OCI-LY7 (cell line): ENCODE measurements at regions of chr19 and their contacts with region 1.

Region 1: GRCh38 chr19:33771384-33772101 is 25.1 kb upstream of the KCTD15 start:
- DNase-seq: peak; percentile 73
- H3K4me3 ChIP-seq: no peak overlapping the region
- H3K27ac ChIP-seq: no peak overlapping the region
- H3K4me1 ChIP-seq: no peaks in the 10 kb centered on the region
- CTCF ChIP-seq: peak; percentile 87

Region 2: GRCh38 chr19:33416307-33417215 is 355.0 kb before region 1 on chr19:
- CTCF ChIA-PET with region 1: no interaction called
- POLR2A ChIA-PET with region 1: no interaction called
- intact Hi-C with region 1: loop called (anchors 1 kb)
- DNase-seq: peak; percentile 66
- H3K4me3 ChIP-seq: no peak overlapping the region
- H3K27ac ChIP-seq: no peak overlapping the region
- H3K4me1 ChIP-seq: no peaks in the 10 kb centered on the region
- CTCF ChIP-seq: peak; percentile 84

Region 3: GRCh38 chr19:33430674-33431277 is 340.8 kb before region 1 on chr19:
- CTCF ChIA-PET with region 1: no interaction called
- POLR2A ChIA-PET with region 1: no interaction called
- intact Hi-C with region 1: loop called (anchors 1 kb)
- DNase-seq: peak; percentile 60
- H3K4me3 ChIP-seq: no peak overlapping the region
- H3K27ac ChIP-seq: no peak overlapping the region
- H3K4me1 ChIP-seq: no peaks in the 10 kb centered on the region
- CTCF ChIP-seq: peak; percentile 85

Region 4: GRCh38 chr19:33698664-33699435 is 72.7 kb before region 1 on chr19:
- CTCF ChIA-PET with region 1: no interaction called
- POLR2A ChIA-PET with region 1: no interaction called
- intact Hi-C with region 1: loop called (anchors 5 kb)
- DNase-seq: no peak
- H3K4me3 ChIP-seq: no peak overlapping the region
- H3K27ac ChIP-seq: no peak overlapping the region
- H3K4me1 ChIP-seq: no peaks in the 10 kb centered on the region
- CTCF ChIP-seq: no peak

Region 5: GRCh38 chr19:33740811-33741396 is 30.6 kb before region 1 on chr19:
- CTCF ChIA-PET with region 1: no interaction called
- POLR2A ChIA-PET with region 1: no interaction called
- intact Hi-C with region 1: no loop called
- DNase-seq: peak; percentile 45
- H3K4me3 ChIP-seq: no peak overlapping the region
- H3K27ac ChIP-seq: no peak overlapping the region
- H3K4me1 ChIP-seq: no peaks in the 10 kb centered on the region
- CTCF ChIP-seq: no peak

Region 6: DNA sequence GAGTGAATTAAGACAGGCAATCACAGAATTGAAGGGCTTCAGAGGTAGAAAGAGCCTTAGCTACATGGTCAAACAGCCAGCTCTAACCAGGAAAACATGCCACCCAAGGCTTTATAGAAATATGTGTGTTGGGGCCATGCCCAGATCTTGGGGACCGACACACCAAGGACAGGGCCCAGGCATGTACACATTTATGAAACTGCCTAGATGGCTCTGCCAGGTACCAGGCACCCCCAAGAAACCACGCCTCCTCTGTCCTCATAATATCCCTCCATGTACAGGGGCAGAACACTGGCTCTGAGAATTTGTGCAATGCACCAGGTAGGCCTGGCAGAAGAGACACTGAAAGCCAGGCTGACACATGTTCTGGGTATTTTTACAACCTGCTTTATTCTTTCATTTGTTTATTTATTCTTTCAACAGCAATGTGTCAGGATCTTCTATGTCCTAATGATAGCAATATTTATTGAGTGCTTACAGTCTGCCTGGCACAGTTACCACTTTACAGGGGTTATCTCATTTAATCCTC is 262.8 kb after region 1 on chr19:
- CTCF ChIA-PET with region 1: no interaction called
- POLR2A ChIA-PET with region 1: no interaction called
- intact Hi-C with region 1: no loop called
- DNase-seq: no peak
- H3K4me3 ChIP-seq: no peak overlapping the region
- H3K27ac ChIP-seq: no peak overlapping the region
- H3K4me1 ChIP-seq: no peaks in the 10 kb centered on the region
- CTCF ChIP-seq: no peak